Activated B cell treated with CpG ODN at 0.5 μM for 24 hours (primary cell): ENCODE measurements at regions of chrX and their contacts with region 1.

Region 1: GRCh38 chrX:136608295-136609171 is 39.4 kb upstream of the CD40LG start:
- DNase-seq: peak; percentile 16
- ATAC-seq: peak; percentile 60
- H3K4me3 Mint-ChIP-seq: no peak overlapping the region
- H3K27ac Mint-ChIP-seq: no peak overlapping the region
- H3K4me1 Mint-ChIP-seq: peaks cover 5% of the 10 kb centered on the region
- H3K27me3 Mint-ChIP-seq: no peaks in the 10 kb centered on the region
- CTCF ChIP-seq: no peak

Region 2: GRCh38 chrX:136899221-136899620 is 290.7 kb after region 1 on chrX:
- CTCF ChIA-PET with region 1: no interaction called
- POLR2A ChIA-PET with region 1: no interaction called
- intact Hi-C with region 1: no loop called
- DNase-seq: no peak
- ATAC-seq: no peak
- H3K4me3 Mint-ChIP-seq: no peak overlapping the region
- H3K27ac Mint-ChIP-seq: no peak overlapping the region
- H3K4me1 Mint-ChIP-seq: no peaks in the 10 kb centered on the region
- H3K27me3 Mint-ChIP-seq: no peaks in the 10 kb centered on the region
- CTCF ChIP-seq: no peak

Region 3: DNA sequence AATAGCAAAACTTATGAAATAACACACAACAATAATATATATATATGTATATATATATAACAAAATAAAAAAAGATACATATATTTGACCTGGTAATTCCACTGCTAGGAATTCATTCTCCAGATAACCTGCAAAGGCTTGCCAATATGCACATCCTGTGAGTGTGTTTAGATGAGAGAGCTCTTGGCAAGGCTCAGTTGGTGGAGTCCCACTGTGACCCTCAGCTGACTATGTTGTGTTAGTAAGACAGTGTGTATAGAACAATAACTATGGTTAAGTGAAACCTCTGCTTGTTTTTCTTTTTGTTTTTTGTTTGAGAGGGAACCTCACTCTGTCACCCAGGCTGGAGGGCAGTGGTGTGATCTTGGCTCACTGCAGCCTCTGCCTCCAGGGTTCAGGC is 311.5 kb after region 1 on chrX:
- CTCF ChIA-PET with region 1: interaction called, 16 read pairs
- POLR2A ChIA-PET with region 1: no interaction called
- intact Hi-C with region 1: loop called (anchors 1 kb)
- DNase-seq: no peak
- ATAC-seq: no peak
- H3K4me3 Mint-ChIP-seq: no peak overlapping the region
- H3K27ac Mint-ChIP-seq: no peak overlapping the region
- H3K4me1 Mint-ChIP-seq: peaks cover 1% of the 10 kb centered on the region
- H3K27me3 Mint-ChIP-seq: no peaks in the 10 kb centered on the region
- CTCF ChIP-seq: no peak